PC-3 (cell line): ENCODE measurements at regions of chr15 and their contacts with region 1.

Region 1: DNA sequence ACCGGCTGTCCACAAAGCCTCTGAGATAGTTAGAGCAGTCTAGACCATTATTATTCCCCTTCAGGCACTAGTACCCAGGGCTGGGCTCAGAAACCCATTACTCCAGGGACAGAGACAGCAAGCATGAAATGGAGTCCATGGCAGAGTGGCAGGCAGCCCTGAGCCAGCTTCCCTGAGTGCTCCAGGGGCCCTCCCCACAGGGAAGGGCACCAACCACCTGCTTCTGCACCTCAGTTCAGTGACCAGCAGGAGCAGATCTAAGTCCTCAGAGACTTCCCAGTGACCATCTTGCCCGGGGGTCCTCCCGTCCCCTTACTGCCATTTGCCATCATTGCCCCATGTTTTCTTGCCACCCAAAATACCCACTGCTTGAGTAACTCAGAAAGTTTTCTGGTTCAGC is 62.0 kb downstream of the DAPK2 start:
- DNase-seq: no peak
- ATAC-seq: no peak
- H3K4me3 ChIP-seq: no peak overlapping the region
- H3K27ac ChIP-seq: no peak overlapping the region
- H3K4me1 ChIP-seq: no peaks in the 10 kb centered on the region
- H3K27me3 ChIP-seq: no peaks in the 10 kb centered on the region
- CTCF ChIP-seq: no peak

Region 2: GRCh38 chr15:63999177-63999576 is 14.8 kb after region 1 on chr15:
- CTCF ChIA-PET with region 1: no interaction called
- POLR2A ChIA-PET with region 1: no interaction called
- intact Hi-C with region 1: loop called (anchors 1 kb)
- DNase-seq: no peak
- ATAC-seq: no peak
- H3K4me3 ChIP-seq: no peak overlapping the region
- H3K27ac ChIP-seq: no peak overlapping the region
- H3K4me1 ChIP-seq: peaks cover 5% of the 10 kb centered on the region
- H3K27me3 ChIP-seq: no peaks in the 10 kb centered on the region
- CTCF ChIP-seq: no peak

Region 3: GRCh38 chr15:64010719-64011118 is 26.4 kb after region 1 on chr15:
- CTCF ChIA-PET with region 1: no interaction called
- POLR2A ChIA-PET with region 1: no interaction called
- intact Hi-C with region 1: no loop called
- DNase-seq: peak; percentile 79
- ATAC-seq: peak; percentile 55
- H3K4me3 ChIP-seq: no peak overlapping the region
- H3K27ac ChIP-seq: peak overlapping the region; percentile 52
- H3K4me1 ChIP-seq: peaks cover 35% of the 10 kb centered on the region
- H3K27me3 ChIP-seq: no peaks in the 10 kb centered on the region
- CTCF ChIP-seq: no peak